Activated CD4-positive, alpha-beta memory T cell treated with anti-CD3 and anti-CD28 coated beads, Interleukin-2, amount 10 ng/mL, durations not matched to agents 7 days and 5 days (primary cell): ENCODE measurements at regions of chr20 and their contacts with region 1.

Region 1: GRCh38 chr20:1503564-1504227 is 12.5 kb upstream of the SIRPB2 start:
- DNase-seq: peak; percentile 77
- H3K4me3 Mint-ChIP-seq: no peak overlapping the region
- H3K27ac Mint-ChIP-seq: no peak overlapping the region
- H3K4me1 Mint-ChIP-seq: peaks cover 3% of the 10 kb centered on the region
- H3K27me3 Mint-ChIP-seq: peaks cover 58% of the 10 kb centered on the region

Region 2: DNA sequence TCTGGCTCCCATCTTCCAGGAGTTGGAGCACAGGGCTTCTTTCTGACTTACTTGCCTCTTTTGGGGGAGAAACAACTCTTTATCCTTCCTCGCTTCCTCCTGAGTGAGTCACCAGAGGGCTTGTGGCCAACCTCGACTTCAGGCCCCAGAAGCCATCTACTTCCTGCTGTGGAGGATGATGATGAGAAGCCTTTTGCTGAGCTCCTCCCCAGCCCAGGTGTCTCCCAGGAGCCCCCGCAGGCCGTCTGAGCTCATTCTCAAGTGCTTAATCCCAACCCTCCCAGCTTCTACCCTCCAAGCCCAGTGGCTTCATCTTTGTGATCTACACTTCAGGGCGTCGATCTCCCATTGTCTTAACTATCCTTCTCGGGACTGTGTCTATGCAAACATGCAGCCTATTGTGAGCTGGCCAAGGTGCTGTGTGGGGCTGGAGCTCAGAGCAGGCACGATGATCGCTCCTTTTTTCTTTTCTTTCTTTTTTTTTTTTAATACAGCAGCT is 202.6 kb before region 1 on chr20:
- CTCF ChIA-PET with region 1: interaction called, 10 read pairs
- POLR2A ChIA-PET with region 1: no interaction called
- DNase-seq: peak; percentile 77
- H3K4me3 Mint-ChIP-seq: peak overlapping the region; percentile 13
- H3K27ac Mint-ChIP-seq: peak overlapping the region; percentile 58
- H3K4me1 Mint-ChIP-seq: peaks cover 21% of the 10 kb centered on the region
- H3K27me3 Mint-ChIP-seq: no peaks in the 10 kb centered on the region

Region 3: GRCh38 chr20:1533059-1533458 is 29.4 kb after region 1 on chr20:
- CTCF ChIA-PET with region 1: interaction called, 17 read pairs
- POLR2A ChIA-PET with region 1: no interaction called
- DNase-seq: no peak
- H3K4me3 Mint-ChIP-seq: no peak overlapping the region
- H3K27ac Mint-ChIP-seq: no peak overlapping the region
- H3K4me1 Mint-ChIP-seq: no peaks in the 10 kb centered on the region
- H3K27me3 Mint-ChIP-seq: peaks cover 15% of the 10 kb centered on the region